Posterior vena cava (tissue), 2 donors: ENCODE measurements at regions of chr4 and their contacts with region 1.

Region 1: GRCh38 chr4:139177868-139178611 is 1.0 kb upstream of the ELF2 start:
- DNase-seq: peak; percentile 99

Region 2: DNA sequence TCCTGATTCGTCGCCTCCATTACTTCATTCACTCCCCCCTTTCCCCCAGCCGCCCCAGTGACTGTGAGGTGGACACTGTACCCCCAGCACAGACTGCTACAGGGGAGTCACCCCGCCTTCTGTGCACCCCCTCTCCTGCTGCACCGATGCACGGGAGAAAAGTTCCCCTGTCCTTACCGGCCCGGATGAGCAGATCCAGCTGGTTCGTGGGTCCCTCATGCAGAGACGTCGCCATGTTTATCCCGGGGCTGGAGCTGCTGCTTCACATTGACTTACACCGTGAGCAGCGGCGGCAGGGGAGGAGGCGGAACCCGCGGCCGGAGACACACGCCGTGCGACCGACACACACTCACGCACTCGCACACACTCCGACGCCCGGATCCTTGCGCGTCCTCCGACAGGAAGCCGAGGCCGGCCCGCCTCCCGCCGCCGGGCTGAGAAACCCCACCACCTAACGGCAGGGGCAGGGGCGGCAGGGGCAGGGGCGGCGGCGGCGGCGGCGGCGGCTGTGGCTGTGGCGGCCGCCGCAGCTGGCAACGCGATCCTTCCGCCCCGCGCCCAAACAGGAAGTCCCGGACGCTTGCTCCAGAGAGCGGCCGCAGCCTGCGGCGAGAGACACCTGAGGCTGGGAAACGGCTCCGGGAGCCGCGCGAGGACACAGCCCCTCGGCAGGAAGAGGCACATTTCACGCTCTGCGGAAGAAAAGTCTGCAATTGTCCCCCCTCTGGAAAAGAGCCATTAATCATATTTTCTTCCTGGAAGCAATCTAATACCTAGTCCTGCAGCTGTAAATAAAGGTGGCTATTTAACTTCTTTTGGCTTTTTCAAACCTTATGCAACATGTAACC is 93.9 kb before region 1 on chr4:
- intact Hi-C with region 1: loop called in 1 of 2 experiments (anchors 5 kb)
- DNase-seq: peak; percentile 97

Region 3: DNA sequence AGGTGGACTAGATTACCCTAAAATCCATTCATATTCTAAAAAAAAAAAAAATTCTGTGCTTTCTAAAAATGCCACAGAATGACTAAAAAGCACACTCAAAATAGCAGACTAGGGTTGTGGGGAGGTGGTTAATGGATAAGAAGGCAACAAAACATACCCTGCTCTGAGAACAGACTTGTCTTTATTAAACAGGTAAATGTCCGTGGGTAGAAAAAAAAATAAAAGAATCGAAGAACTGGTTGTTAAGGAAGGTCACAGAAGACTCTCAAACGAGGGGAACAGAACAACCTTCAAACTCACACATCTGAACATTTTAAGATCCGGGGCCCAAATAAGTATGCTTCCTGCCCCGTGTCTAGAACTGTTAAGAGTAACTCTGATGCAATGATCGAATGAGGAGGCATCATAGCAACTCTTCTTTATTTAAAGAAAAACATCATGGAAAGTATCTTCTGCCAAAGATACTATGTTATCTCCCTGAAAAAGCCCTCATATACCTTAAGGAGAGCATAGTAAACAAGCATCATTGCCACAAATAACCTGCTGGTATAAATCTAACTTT is 69.4 kb before region 1 on chr4:
- intact Hi-C with region 1: loop called in 1 of 2 experiments (anchors 10 kb)
- DNase-seq: no peak